PC-9 (cell line): ENCODE measurements at regions of chr13 and their contacts with region 1.

Region 1: GRCh38 chr13:33697936-33698335 is 120.0 kb upstream of the RFC3 start:
- DNase-seq: peak in 1 of 2 experiments; percentile 70
- H3K4me3 ChIP-seq: no peak overlapping the region
- H3K27ac ChIP-seq: peak overlapping the region; percentile 81
- H3K4me1 ChIP-seq: peaks cover 39% of the 10 kb centered on the region
- H3K27me3 ChIP-seq: no peaks in the 10 kb centered on the region
- CTCF ChIP-seq: no peak

Region 2: GRCh38 chr13:33676045-33676989 is 21.6 kb before region 1 on chr13:
- CTCF ChIA-PET with region 1: no interaction called
- POLR2A ChIA-PET with region 1: no interaction called
- intact Hi-C with region 1: loop called (anchors 2 kb)
- DNase-seq: no peak
- H3K4me3 ChIP-seq: no peak overlapping the region
- H3K27ac ChIP-seq: no peak overlapping the region
- H3K4me1 ChIP-seq: no peaks in the 10 kb centered on the region
- H3K27me3 ChIP-seq: no peaks in the 10 kb centered on the region
- CTCF ChIP-seq: no peak